ENCODE measurements at regions of chr12 and their contacts with region 1.

Region 1: DNA sequence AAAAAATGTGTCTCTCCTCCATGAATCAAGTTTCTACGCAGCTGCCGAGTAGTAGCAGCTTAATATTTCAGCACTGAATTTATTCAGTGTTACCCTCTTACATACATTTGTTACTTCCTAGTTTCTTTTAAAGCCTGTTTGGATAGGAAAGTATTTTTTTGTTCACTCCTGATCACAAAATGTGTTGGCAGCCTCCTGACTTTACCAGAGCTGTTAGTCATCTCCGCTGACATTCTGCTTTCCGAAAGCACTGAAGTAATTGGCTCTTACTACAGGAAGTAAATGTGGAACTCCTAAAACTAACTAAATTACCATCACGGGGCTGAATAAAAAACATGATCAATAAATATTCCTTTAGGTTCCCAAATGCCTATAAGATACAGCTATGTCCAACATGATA is 225.5 kb downstream of the EPS8 start:
- DNase-seq: peak; percentile 53
- ATAC-seq: peak; percentile 79
- H3K4me3 Mint-ChIP-seq: peak overlapping the region; percentile 55
- H3K27ac Mint-ChIP-seq: peak overlapping the region; percentile 94
- H3K4me1 Mint-ChIP-seq: peaks cover 67% of the 10 kb centered on the region
- H3K27me3 Mint-ChIP-seq: no peaks in the 10 kb centered on the region

Region 2: DNA sequence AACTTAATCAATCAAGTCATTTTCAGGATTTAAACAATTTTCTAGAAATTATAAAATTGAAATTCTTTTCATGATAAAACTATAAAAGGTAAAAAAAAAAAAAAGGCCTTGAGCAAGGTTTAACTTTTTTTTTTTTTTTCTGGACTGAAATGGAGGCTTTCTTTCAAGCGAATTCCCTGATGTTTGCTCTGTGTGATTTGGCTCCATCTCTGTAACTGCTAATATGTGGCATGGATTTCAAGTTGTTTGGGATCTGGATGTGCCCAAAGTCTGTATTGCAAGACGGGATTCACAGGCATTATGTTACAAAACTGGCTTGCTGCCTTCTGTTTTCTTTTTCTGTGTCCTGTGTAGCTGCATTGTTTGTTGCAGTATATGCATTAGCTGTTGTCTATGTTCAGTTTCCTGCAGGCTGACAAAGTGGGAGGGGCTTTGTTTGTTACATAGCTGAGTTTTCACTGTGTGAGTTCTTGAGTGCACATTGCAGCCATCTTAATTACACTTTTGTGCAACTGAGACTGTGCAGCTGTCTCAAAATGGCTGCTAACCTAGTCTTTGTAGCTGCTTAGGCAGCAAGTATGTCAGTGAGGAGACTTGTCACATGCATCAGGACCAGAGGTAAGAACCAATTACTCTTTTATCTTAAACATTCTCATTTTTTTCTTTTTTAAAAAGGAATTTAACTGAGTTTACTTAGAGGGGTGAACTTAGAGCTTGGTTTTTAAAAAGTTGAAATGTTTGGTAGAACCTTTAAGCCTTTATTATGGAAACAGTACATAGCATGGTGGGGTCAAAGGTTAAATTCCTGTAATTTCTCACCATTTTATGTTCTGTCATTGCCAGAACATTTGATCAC is 1178.7 kb before region 1 on chr12:
- CTCF ChIA-PET with region 1: no interaction called
- POLR2A ChIA-PET with region 1: no interaction called
- intact Hi-C with region 1: loop called in 1 of 2 experiments (anchors 5 kb)
- DNase-seq: peak; percentile 75
- ATAC-seq: peak; percentile 96
- H3K4me3 Mint-ChIP-seq: peak overlapping the region; percentile 73
- H3K27ac Mint-ChIP-seq: peak overlapping the region; percentile 94
- H3K4me1 Mint-ChIP-seq: peaks cover 59% of the 10 kb centered on the region
- H3K27me3 Mint-ChIP-seq: no peaks in the 10 kb centered on the region

Region 3: DNA sequence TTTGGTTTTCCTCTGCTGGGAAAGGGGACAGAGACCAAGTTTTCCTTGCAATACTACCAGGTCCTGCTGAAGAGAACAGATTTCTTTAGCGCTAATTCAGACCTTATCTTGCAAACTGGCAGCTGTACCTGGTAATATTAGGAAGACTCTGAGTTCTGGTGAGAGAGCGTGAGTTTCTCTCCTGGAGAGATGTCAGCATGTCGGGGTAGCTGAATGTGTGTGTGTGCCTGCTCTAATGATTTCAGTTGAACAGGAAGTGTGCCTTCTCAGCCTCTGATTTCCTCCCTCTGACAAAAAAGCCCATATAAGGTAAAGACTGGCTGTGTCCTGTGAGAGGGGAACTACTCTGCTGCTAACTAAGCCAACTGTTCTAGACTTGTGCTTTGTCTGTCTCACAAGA is 615.0 kb before region 1 on chr12:
- CTCF ChIA-PET with region 1: no interaction called
- POLR2A ChIA-PET with region 1: no interaction called
- intact Hi-C with region 1: loop called in 1 of 2 experiments (anchors 5 kb)
- DNase-seq: peak; percentile 68
- ATAC-seq: peak; percentile 82
- H3K4me3 Mint-ChIP-seq: peak overlapping the region; percentile 73
- H3K27ac Mint-ChIP-seq: peak overlapping the region; percentile 96
- H3K4me1 Mint-ChIP-seq: peaks cover 87% of the 10 kb centered on the region
- H3K27me3 Mint-ChIP-seq: no peaks in the 10 kb centered on the region

Region 4: GRCh38 chr12:15532364-15532977 is 31.2 kb before region 1 on chr12:
- CTCF ChIA-PET with region 1: interaction called, 27 read pairs
- POLR2A ChIA-PET with region 1: no interaction called
- intact Hi-C with region 1: loop called in 1 of 2 experiments (anchors 2 kb)
- DNase-seq: peak; percentile 66
- ATAC-seq: peak; percentile 76
- H3K4me3 Mint-ChIP-seq: no peak overlapping the region
- H3K27ac Mint-ChIP-seq: no peak overlapping the region
- H3K4me1 Mint-ChIP-seq: no peaks in the 10 kb centered on the region
- H3K27me3 Mint-ChIP-seq: no peaks in the 10 kb centered on the region

Region 5: DNA sequence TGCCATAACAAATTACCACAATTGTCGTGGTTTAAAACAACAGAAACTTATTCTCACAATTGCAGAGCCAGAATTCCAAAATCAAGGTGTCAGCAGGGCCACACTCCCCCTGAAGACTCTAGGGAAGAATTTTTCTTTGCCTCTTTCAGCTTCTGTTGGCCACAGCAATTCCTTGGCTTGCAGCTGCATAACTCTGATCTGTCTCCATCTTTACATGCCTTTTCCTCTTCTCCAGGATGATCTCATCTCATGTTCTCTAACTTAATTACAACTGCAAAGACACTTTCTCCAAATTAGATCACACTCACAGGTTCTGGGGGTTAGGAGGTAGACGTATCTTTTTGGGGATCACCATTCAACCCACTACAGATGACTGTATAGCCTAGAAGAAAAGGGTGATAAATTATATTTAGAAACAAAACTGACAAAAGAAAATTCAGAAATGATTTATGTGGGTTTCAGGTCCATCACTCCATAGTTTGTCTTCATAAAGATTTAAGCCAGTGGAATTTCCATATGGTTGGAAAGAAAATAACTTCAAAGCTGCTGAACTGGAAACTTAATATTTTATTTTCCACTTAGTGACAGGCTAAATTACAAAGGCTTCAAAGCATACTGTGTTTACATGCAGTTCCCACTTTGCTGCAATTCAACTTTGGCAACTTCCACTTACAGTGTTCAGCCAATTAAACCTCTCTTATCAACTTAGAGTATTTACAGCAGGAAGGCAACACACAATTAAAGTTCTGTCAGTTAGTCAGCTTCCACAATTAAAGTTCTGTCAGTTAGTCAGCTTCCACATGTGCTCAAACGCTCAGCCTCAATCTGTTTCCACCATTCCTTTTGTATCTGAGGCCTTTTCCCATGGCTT is 12.2 kb after region 1 on chr12:
- CTCF ChIA-PET with region 1: interaction called, 21 read pairs
- POLR2A ChIA-PET with region 1: interaction called, 5 read pairs
- intact Hi-C with region 1: loop called (anchors 1 kb)
- DNase-seq: no peak
- ATAC-seq: peak; percentile 18
- H3K4me3 Mint-ChIP-seq: no peak overlapping the region
- H3K27ac Mint-ChIP-seq: peak overlapping the region; percentile 42
- H3K4me1 Mint-ChIP-seq: peaks cover 62% of the 10 kb centered on the region
- H3K27me3 Mint-ChIP-seq: peaks cover 2% of the 10 kb centered on the region